ENCODE measurements at regions of chr7 and their contacts with region 1.

Region 1: DNA sequence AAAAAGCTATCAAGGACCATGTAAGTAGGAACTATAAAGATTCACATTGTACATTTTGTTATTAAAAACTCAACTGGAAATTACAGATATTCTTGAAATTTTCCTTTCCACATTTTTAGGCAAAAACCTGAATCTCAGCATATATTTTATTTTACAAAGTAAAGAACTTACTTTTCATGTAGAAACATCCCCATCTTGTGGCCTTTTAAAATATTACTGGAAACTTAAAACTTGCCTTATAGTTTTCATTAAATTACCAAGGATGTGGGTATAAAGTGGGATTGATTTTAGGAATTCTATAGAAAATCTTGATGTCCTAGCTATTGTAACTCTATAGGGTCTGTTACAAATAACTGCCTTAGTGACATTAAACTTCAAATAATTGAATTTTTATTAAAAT is 10.6 kb downstream of the DBF4 start:
- DNase-seq: no peak
- H3K4me3 ChIP-seq: no peak overlapping the region
- H3K27ac ChIP-seq: no peak overlapping the region
- H3K4me1 ChIP-seq: no peaks in the 10 kb centered on the region
- H3K27me3 ChIP-seq: no peaks in the 10 kb centered on the region
- CTCF ChIP-seq: peak; percentile 39 to 43

Region 2: GRCh38 chr7:87797798-87798403 is 89.0 kb before region 1 on chr7:
- intact Hi-C with region 1: loop called (anchors 10 kb)
- DNase-seq: no peak
- H3K4me3 ChIP-seq: no peak overlapping the region
- H3K27ac ChIP-seq: no peak overlapping the region
- H3K4me1 ChIP-seq: no peaks in the 10 kb centered on the region
- H3K27me3 ChIP-seq: no peaks in the 10 kb centered on the region
- CTCF ChIP-seq: peak; percentile 39 to 47

Region 3: DNA sequence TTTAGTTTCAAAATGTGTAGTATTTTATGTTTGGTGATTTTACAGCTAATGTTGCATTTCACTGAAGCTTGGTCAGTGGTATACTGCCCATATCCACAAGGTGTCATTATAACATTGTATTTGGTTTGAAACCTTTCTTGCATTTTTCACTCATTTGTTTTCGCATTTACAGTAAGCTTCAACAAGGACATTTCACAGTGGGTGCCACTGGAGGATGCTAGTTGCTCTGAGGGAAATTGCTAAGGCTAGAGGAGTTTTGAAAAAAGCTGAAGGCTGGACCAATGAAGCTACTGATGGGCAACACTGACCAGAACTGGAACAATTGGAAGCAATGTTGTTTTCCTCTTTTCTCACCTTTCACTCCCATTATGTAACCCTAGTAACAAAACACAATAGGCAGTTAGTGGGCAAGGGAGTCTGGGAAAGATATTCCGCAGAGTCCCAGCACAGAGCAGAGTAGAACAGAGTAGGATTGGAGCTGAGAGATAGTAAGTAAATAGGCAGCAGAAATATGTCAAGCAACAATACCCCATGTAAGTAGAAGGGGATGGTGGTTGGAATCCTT is 356.6 kb after region 1 on chr7:
- intact Hi-C with region 1: no loop called
- DNase-seq: no peak
- H3K4me3 ChIP-seq: no peak overlapping the region
- H3K27ac ChIP-seq: no peak overlapping the region
- H3K4me1 ChIP-seq: peaks cover 0 to 4% (median 0%) of the 10 kb centered on the region in 4 donors
- H3K27me3 ChIP-seq: no peaks in the 10 kb centered on the region
- CTCF ChIP-seq: peak; percentile 61 to 67